ENCODE measurements at regions of chr11 and their contacts with region 1.

Region 1: DNA sequence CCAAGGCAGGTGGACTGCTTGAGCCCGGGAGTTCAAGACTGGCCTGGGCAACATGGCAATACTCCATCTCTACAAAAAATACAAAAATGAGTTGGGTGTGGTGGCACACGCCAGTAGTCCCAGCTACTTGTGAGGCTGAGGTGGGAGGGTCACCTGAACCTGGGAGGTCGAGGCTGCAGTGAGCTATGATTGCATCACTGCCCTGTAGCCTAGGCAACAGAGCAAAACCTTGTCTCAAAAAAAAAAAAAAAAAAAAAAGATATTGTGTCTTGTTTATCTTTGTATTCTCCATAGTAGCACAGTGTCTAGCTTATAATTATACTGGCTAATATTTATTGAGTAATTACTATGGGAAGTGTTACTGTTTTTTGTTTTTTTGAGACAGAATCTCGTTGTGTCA is 15.8 kb upstream of the GPHA2 start:
- DNase-seq: no peak
- ATAC-seq: no peak

Region 2: GRCh38 chr11:64585150-64585549 is 366.4 kb before region 1 on chr11:
- intact Hi-C with region 1: loop called (anchors 5 kb)
- DNase-seq: no peak
- ATAC-seq: no peak

Measured in sciatic nerve (tissue), 2 donors.